ENCODE measurements at regions of chr9 and their contacts with region 1.

Region 1: DNA sequence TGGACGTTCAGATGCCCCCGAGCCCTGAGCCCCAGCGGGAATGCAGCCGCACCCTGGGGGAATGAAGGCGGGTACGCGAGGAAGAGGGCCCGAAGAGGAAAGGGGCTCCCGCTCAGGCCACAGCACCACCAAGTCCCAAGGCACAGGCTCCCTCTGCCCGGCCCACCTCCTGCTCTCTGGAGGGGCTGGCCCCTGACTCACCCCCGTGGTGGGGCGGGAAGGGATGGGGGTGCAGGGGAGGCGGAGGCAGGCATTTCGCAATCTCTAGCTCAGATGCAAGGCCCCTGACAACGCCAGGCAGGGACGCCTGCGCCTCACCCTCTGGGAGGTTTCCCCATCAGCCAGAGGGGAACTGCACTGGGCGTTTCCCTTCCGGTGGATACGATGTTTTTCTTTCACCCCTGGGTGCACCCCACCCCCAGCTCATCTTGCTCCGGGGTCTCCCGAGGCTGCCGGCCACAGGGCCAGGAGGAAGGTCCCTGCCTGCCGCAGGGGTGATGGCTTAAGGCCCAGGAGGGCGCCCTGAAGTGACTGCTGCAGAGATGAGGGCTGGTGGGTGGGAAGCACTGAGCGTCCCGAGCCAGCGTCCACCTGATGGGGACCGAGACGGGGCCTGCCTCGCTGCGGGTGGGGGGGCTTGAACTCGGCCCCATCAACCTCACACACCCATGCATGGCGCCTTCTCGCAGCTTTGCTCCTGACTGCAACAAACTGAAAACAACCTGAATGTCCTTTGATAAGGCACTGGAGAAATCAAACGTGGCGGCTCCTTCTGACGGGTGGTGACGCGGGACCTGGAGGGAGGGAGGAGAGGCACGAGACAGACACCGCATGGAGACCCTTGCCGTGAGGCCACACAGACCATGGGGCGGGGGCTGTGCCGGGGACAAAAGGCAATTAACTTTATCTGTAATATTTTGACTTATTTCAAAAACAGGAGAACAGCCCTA is 48.8 kb downstream of the NACC2 start:
- DNase-seq: peak; percentile 86

Region 2: DNA sequence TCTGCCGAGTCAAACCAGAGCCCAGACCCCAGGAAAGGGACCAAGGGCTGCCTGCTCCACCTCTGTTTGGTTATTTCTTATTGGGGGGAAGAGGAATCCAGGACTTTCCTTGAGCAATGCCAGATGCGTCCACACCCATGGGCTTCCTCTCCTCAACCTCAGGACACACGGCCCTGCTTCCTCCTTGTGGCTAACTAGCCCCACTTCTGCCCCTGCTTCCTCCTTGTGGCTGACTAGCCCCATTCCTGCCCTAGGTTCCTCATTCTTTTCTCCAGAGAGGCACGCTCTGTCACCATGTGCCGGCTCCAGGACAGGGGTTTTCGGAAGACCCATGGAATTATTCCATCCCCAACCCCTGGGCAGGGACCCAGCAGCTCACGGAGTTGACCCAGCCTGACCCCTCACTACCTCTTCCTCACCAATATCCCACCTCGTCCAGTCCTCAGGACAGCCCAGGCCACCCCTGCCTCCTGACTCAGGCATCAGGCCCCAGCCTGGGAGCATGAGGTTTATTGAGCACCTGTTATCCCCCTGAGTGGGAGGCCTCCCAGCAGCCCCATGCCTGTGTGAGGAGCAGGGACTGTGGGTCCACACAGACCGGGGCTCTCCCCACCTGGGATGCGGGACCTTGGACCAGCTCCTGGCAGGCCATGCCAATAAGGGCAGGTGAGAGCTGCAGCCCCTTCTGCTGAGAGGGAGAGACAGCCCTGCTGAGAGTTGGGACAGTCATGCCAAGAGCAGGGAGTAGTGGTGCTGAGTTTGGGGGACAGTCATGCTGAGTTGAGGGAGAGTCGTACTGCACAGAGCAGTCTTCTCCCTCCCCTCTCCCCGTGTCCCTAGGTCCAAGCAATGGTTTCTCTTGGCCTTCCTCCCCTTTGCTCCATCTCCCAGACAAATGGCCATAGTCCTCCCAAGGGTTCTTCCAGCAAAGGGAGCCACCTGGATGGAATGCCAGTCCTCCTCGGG is 1116.8 kb before region 1 on chr9:
- intact Hi-C with region 1: loop called in 1 of 2 experiments (anchors 5 kb)
- DNase-seq: peak; percentile 86

Region 3: DNA sequence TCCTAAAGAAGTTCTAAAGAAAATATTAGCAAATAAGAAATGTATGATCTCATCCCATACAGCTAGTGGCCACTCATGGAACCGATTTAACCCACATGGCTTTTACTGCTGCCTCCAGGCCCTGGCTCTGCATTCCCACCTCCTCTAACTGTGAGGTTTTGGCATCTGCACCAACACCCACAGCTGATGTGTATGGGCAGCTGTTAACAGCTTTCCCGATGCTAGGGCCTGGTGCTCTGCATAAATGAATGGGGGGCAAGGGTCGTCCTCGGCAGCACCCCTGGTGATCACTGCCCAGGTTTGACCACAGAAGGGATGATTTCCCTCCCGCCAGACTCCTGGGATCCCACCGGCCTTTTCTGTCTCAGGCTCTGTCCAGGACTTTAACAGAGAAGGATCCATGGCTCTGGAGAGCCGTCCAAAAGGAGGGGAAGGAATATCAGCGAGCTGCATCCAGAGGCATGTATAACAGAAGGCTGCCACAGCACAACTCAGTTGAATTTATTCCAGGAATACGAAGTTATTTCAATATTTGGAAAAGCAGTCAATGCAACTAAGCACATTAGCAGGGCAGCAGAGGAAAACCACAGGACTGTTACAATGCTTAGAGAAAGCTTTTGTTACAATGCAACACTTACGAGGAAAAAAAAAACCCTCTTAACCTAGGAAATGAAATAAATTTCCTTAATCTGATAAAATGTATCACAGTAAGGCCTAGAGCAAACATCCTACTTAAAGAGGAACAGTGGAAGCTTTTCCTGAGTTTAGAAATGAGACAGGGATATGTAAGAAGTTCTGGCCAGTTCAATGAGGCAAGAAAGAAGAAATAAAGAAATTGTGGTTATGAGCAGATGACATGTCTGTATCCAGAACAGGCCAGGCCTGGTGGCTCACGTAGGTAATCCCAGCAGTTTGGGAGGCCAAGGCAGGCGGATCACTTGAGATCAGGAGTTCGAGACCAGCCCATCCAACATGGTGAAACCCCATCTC is 14.2 kb before region 1 on chr9:
- intact Hi-C with region 1: no loop called
- DNase-seq: no peak

Measured in posterior vena cava (tissue), 2 donors.